ENCODE measurements at regions of chr1 and their contacts with region 1.

Region 1: DNA sequence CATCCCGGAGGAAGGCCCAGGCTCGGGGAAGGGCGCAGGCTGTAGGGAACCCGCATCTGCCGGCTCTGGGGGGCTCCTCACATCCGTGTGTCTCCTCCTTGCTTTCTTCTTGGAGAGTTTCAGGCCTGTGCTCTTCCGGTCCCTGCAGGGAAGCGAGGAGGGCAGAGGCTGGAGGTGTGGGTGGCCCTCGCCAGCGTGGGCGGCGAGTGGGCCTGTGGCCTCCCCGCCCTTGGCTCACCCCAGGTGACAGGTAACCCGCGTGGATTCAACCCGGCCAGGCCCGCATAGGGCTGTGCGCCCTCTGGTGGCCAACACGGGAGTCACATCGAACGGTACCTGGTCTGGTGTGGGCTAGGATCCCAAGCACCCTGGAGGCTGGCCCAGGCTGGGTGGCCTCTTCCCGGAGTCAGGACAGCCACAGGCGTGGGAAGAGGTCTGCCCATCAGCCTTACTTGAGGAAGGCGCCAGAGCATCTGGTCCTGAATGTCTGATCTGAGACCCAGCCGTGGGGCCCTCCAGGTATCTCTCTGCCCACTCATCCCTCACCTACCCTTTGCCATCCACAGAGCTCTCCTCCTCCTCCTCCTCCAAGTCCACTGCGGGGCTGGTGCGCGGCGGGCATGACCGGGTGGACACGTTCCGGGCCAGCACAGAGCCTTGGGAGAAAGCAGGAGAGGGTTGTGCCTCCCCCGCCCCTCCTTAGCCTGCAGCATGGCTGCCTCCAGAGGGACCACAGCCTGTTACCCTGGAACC is 9.6 kb upstream of the TNFRSF25 start:
- DNase-seq: no peak
- ATAC-seq: peak; percentile 97
- H3K4me3 ChIP-seq: no peak overlapping the region
- H3K27ac ChIP-seq: no peak overlapping the region
- H3K4me1 ChIP-seq: no peaks in the 10 kb centered on the region
- H3K27me3 ChIP-seq: no peaks in the 10 kb centered on the region
- CTCF ChIP-seq: peak; percentile 86 to 95 (median 94)
- EP300 ChIP-seq: no peak
- POLR2A ChIP-seq: no peak
- RAD21 ChIP-seq: peak; percentile 48

Region 2: GRCh38 chr1:6460301-6461050 is 15.1 kb before region 1 on chr1:
- CTCF ChIA-PET with region 1: interaction called, 3 read pairs
- POLR2A ChIA-PET with region 1: no interaction called
- RAD21 ChIA-PET with region 1: no interaction called
- SMC1A ChIA-PET with region 1: no interaction called
- in situ Hi-C with region 1: no loop called
- intact Hi-C with region 1: loop called (anchors 1 kb)
- DNase-seq: no peak
- ATAC-seq: peak; percentile 67
- H3K4me3 ChIP-seq: peak overlapping the region; percentile 27; the same call in 1 of the 2 replicates
- H3K27ac ChIP-seq: no peak overlapping the region
- H3K4me1 ChIP-seq: no peaks in the 10 kb centered on the region; the same call in 1 of the 2 replicates
- H3K27me3 ChIP-seq: peaks cover 1 to 4% of the 10 kb centered on the region in 2 experiments; a peak in 2 of 4 replicates
- CTCF ChIP-seq: no peak
- EP300 ChIP-seq: no peak
- POLR2A ChIP-seq: no peak
- RAD21 ChIP-seq: no peak

Region 3: DNA sequence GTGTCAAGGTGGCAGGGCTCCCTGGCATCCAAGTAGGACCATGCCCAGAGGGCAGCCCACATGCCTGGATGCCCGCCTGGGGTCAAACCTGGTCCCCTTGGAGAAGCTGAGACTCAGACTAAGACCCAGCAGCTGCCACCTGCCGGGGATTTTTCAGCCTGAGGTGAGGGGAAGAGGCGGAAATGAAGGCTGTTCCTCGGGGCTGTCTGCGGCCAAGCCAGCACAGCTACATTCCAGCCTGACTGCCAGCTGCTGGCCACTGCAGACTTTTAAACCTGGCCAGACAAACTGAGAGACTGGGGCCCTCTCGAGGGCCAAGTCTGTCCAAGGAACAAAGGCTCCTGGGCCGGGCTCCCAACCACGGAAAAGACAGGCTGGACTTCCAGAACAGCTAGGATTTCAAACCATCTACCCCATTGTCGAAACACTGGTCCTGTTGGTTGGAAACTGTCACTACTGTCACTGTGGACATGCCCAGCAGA is 37.8 kb after region 1 on chr1:
- CTCF ChIA-PET with region 1: no interaction called
- POLR2A ChIA-PET with region 1: no interaction called
- RAD21 ChIA-PET with region 1: no interaction called
- SMC1A ChIA-PET with region 1: no interaction called
- in situ Hi-C with region 1: no loop called
- intact Hi-C with region 1: no loop called
- DNase-seq: no peak
- ATAC-seq: peak; percentile 90
- H3K4me3 ChIP-seq: no peak overlapping the region
- H3K27ac ChIP-seq: no peak overlapping the region
- H3K4me1 ChIP-seq: no peaks in the 10 kb centered on the region
- H3K27me3 ChIP-seq: no peaks in the 10 kb centered on the region; a peak in 1 of 4 replicates
- CTCF ChIP-seq: no peak
- EP300 ChIP-seq: no peak
- POLR2A ChIP-seq: no peak
- RAD21 ChIP-seq: no peak

Region 4: GRCh38 chr1:6544831-6545230 is 69.3 kb after region 1 on chr1:
- CTCF ChIA-PET with region 1: no interaction called
- POLR2A ChIA-PET with region 1: no interaction called
- RAD21 ChIA-PET with region 1: no interaction called
- SMC1A ChIA-PET with region 1: no interaction called
- in situ Hi-C with region 1: no loop called
- intact Hi-C with region 1: no loop called
- DNase-seq: no peak
- ATAC-seq: no peak
- H3K4me3 ChIP-seq: no peak overlapping the region
- H3K27ac ChIP-seq: no peak overlapping the region
- H3K4me1 ChIP-seq: no peaks in the 10 kb centered on the region
- H3K27me3 ChIP-seq: no peaks in the 10 kb centered on the region
- CTCF ChIP-seq: no peak
- EP300 ChIP-seq: no peak
- POLR2A ChIP-seq: no peak
- RAD21 ChIP-seq: no peak

Measured in GM12878 (cell line).